Endothelial cell of umbilical vein (primary cell): ENCODE measurements at regions of chr15 and their contacts with region 1.

Region 1: DNA sequence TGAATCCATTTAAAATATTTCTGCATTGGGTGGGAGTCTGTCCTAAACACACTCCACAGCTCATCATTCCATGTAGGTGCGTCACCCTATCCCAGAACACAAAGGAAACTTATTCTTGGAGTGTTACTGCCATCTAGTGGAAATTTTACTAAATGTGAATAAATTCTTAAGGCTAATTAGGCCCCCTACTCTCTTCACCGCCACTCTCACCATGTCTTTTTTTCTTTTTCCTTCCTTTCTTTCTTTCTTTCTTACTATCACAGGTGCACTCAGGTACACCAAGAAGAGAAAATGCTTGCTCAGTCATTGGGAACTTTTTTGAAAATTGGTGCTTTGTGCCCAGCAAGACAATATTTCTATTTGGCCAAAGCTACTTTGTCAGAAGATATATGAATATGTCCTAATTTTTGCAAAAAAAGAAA is 26.4 kb upstream of the ATP8B4 start:
- DNase-seq: peak; percentile 73
- H3K4me3 ChIP-seq: no peak overlapping the region
- H3K27ac ChIP-seq: no peak overlapping the region
- H3K4me1 ChIP-seq: peaks cover 2% of the 10 kb centered on the region
- H3K27me3 ChIP-seq: no peaks in the 10 kb centered on the region
- CTCF ChIP-seq: peak; percentile 16 to 25
- POLR2A ChIP-seq: no peak

Region 2: GRCh38 chr15:48868536-48868935 is 1276.9 kb before region 1 on chr15:
- CTCF ChIA-PET with region 1: interaction called, 13 read pairs
- POLR2A ChIA-PET with region 1: no interaction called
- dilution Hi-C with region 1: no loop called
- intact Hi-C with region 1: no loop called
- DNase-seq: peak; percentile 35
- H3K4me3 ChIP-seq: no peak overlapping the region
- H3K27ac ChIP-seq: no peak overlapping the region
- H3K4me1 ChIP-seq: peaks cover 12% of the 10 kb centered on the region
- H3K27me3 ChIP-seq: peaks cover 4 to 11% of the 10 kb centered on the region in 2 experiments
- CTCF ChIP-seq: no peak
- POLR2A ChIP-seq: no peak

Region 3: GRCh38 chr15:49242820-49243219 is 902.6 kb before region 1 on chr15:
- CTCF ChIA-PET with region 1: interaction called, 79 read pairs
- POLR2A ChIA-PET with region 1: no interaction called
- dilution Hi-C with region 1: no loop called
- intact Hi-C with region 1: no loop called
- DNase-seq: no peak
- H3K4me3 ChIP-seq: no peak overlapping the region
- H3K27ac ChIP-seq: no peak overlapping the region
- H3K4me1 ChIP-seq: no peaks in the 10 kb centered on the region
- H3K27me3 ChIP-seq: no peaks in the 10 kb centered on the region
- CTCF ChIP-seq: no peak
- POLR2A ChIP-seq: no peak

Region 4: GRCh38 chr15:49620658-49621368 is 524.6 kb before region 1 on chr15 and contains the starts of genes DTWD1 and FAM227B:
- CTCF ChIA-PET with region 1: no interaction called
- POLR2A ChIA-PET with region 1: no interaction called
- dilution Hi-C with region 1: no loop called
- intact Hi-C with region 1: loop called (anchors 1 kb)
- DNase-seq: peak; percentile 98
- H3K4me3 ChIP-seq: peak within 1 kb of the TSS; percentile 79 to 95 (median 91)
- H3K27ac ChIP-seq: peak within 1 kb of the TSS; percentile 64
- H3K4me1 ChIP-seq: peaks cover 11% of the 10 kb centered on the region
- H3K27me3 ChIP-seq: no peaks in the 10 kb centered on the region
- CTCF ChIP-seq: no peak
- POLR2A ChIP-seq: peak; percentile 88
- total RNA-seq, gene DTWD1: 18.7 and 20.1 TPM in 2 replicates
- total RNA-seq, gene FAM227B: 1.5 and 1.8 TPM in 2 replicates

Region 5: DNA sequence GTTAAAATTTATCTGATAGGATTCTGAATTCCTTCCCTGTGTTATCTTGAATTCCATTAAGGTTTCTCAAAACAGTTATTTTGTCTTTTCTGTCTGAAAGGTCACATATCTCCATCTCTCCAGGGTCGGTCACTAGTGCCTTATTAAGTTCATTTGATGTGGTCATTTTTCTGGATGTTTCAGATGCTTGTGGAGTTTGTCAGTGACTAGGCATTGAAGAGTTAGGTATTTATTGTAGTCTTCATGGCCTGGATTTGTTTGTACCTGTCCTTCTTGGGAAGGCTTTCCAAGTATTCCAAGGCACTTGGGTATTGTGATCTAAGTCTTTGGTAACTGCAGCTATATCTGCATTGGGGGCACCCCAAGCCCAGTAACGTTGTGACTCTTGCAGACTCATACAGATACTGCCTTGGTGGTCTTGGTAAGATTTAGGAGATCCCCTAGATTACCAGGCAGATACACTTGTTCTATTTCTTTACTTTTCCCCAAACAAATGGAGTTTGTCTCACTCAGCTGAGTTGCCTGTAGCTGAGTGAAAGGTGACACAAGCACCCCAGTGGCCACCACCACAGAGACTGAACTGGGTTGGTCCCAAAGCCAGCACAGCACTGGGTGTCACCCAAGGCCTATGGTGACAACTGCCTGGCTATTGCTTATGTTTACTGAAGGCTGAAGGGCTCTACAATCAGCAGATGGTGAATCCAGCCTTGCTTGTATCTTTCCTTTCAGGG is 17.7 kb after region 1 on chr15:
- CTCF ChIA-PET with region 1: interaction called, 10 read pairs
- POLR2A ChIA-PET with region 1: no interaction called
- dilution Hi-C with region 1: no loop called
- intact Hi-C with region 1: no loop called
- DNase-seq: no peak
- H3K4me3 ChIP-seq: no peak overlapping the region
- H3K27ac ChIP-seq: no peak overlapping the region
- H3K4me1 ChIP-seq: peaks cover 10% of the 10 kb centered on the region
- H3K27me3 ChIP-seq: peaks cover 0 to 3% of the 10 kb centered on the region in 2 experiments
- CTCF ChIP-seq: no peak
- POLR2A ChIP-seq: no peak